Dendritic cell treated with granulocyte-macrophage colony-stimulating factor and Interleukin-4, amounts not matched to agents 40 ng/mL and 50 ng/mL, for 4 days (primary cell): ENCODE measurements at regions of chr3 and their contacts with region 1.

Region 1: GRCh38 chr3:31695280-31696008 is 162.7 kb downstream of the STT3B start:
- H3K4me3 Mint-ChIP-seq: no peak overlapping the region
- H3K27ac Mint-ChIP-seq: no peak overlapping the region
- H3K4me1 Mint-ChIP-seq: peaks cover 5% of the 10 kb centered on the region
- H3K27me3 Mint-ChIP-seq: no peaks in the 10 kb centered on the region

Region 2: GRCh38 chr3:30768703-30769685 is 926.5 kb before region 1 on chr3:
- intact Hi-C with region 1: loop called (anchors 5 kb)
- H3K4me3 Mint-ChIP-seq: no peak overlapping the region
- H3K27ac Mint-ChIP-seq: no peak overlapping the region
- H3K4me1 Mint-ChIP-seq: peaks cover 19% of the 10 kb centered on the region
- H3K27me3 Mint-ChIP-seq: no peaks in the 10 kb centered on the region

Region 3: DNA sequence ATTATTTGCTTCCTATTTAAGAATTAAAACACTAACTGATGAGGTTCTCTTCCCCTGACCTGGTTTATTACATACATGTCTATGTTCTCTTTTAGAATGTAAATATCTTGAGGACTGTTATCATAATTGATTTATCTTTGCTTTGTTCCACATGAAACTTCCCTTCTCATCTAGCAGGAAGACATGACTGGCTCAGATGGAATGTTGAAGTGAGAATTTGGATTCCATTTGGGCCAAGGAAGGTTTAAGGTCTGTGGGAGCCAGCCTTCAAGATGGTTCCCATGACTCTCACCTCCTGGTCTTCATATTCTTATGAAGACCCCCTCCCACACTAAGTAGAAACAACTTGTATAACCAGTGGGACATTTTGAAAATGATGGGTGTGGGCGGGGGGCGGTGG is 578.8 kb before region 1 on chr3:
- intact Hi-C with region 1: no loop called
- H3K4me3 Mint-ChIP-seq: no peak overlapping the region
- H3K27ac Mint-ChIP-seq: no peak overlapping the region
- H3K4me1 Mint-ChIP-seq: no peaks in the 10 kb centered on the region
- H3K27me3 Mint-ChIP-seq: no peaks in the 10 kb centered on the region

Region 4: GRCh38 chr3:31550452-31551251 is 144.8 kb before region 1 on chr3:
- intact Hi-C with region 1: loop called (anchors 5 kb)
- H3K4me3 Mint-ChIP-seq: no peak overlapping the region
- H3K27ac Mint-ChIP-seq: no peak overlapping the region
- H3K4me1 Mint-ChIP-seq: peaks cover 59% of the 10 kb centered on the region
- H3K27me3 Mint-ChIP-seq: no peaks in the 10 kb centered on the region

Region 5: GRCh38 chr3:31610700-31611275 is 84.7 kb before region 1 on chr3:
- intact Hi-C with region 1: loop called (anchors 2 kb)
- H3K4me3 Mint-ChIP-seq: no peak overlapping the region
- H3K27ac Mint-ChIP-seq: no peak overlapping the region
- H3K4me1 Mint-ChIP-seq: peaks cover 26% of the 10 kb centered on the region
- H3K27me3 Mint-ChIP-seq: no peaks in the 10 kb centered on the region